ENCODE measurements at regions of chr9 and their contacts with region 1.

Region 1: GRCh38 chr9:110152704-110153374 is 55.1 kb downstream of the C9orf152 start:
- H3K4me3 Mint-ChIP-seq: no peak overlapping the region
- H3K27ac Mint-ChIP-seq: no peak overlapping the region
- H3K4me1 Mint-ChIP-seq: peaks cover 60% of the 10 kb centered on the region
- H3K27me3 Mint-ChIP-seq: no peaks in the 10 kb centered on the region

Region 2: GRCh38 chr9:109574068-109574882 is 578.6 kb before region 1 on chr9:
- intact Hi-C with region 1: loop called (anchors 10 kb)
- H3K4me3 Mint-ChIP-seq: no peak overlapping the region
- H3K27ac Mint-ChIP-seq: no peak overlapping the region
- H3K4me1 Mint-ChIP-seq: no peaks in the 10 kb centered on the region
- H3K27me3 Mint-ChIP-seq: peaks cover 14% of the 10 kb centered on the region

Region 3: GRCh38 chr9:109903515-109904138 is 249.2 kb before region 1 on chr9:
- intact Hi-C with region 1: loop called (anchors 1 kb)
- H3K4me3 Mint-ChIP-seq: no peak overlapping the region
- H3K27ac Mint-ChIP-seq: no peak overlapping the region
- H3K4me1 Mint-ChIP-seq: peaks cover 15% of the 10 kb centered on the region
- H3K27me3 Mint-ChIP-seq: peaks cover 7% of the 10 kb centered on the region

Region 4: GRCh38 chr9:110021891-110022290 is 130.9 kb before region 1 on chr9:
- intact Hi-C with region 1: no loop called
- H3K4me3 Mint-ChIP-seq: peak overlapping the region; percentile 39
- H3K27ac Mint-ChIP-seq: peak overlapping the region; percentile 76
- H3K4me1 Mint-ChIP-seq: peaks cover 25% of the 10 kb centered on the region
- H3K27me3 Mint-ChIP-seq: peaks cover 45% of the 10 kb centered on the region

Region 5: GRCh38 chr9:110058304-110058953 is 94.4 kb before region 1 on chr9:
- intact Hi-C with region 1: loop called (anchors 2 kb)
- H3K4me3 Mint-ChIP-seq: no peak overlapping the region
- H3K27ac Mint-ChIP-seq: peak overlapping the region; percentile 7
- H3K4me1 Mint-ChIP-seq: peaks cover 19% of the 10 kb centered on the region
- H3K27me3 Mint-ChIP-seq: no peaks in the 10 kb centered on the region

Region 6: DNA sequence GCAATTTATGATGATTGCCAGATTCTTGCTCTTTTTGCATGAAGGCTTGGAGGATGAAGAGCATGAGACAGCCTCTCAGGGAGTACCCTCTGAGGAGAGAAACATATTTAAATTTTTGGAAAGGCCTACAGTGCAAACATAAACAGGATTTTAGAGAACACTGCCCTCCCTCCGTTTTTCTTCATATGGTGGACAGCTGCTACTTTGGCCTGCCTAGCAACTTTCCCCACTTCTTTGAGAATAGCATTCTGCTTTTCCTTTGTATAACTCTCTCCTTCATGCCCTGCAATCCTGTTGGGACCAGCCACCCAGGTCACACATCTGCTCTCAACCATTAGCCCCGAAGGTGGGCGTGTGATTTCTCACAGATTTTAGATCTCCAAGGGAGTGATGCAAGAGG is 123.9 kb after region 1 on chr9:
- intact Hi-C with region 1: no loop called
- H3K4me3 Mint-ChIP-seq: no peak overlapping the region
- H3K27ac Mint-ChIP-seq: no peak overlapping the region
- H3K4me1 Mint-ChIP-seq: peaks cover 5% of the 10 kb centered on the region
- H3K27me3 Mint-ChIP-seq: no peaks in the 10 kb centered on the region

Measured in dendritic cell treated with granulocyte-macrophage colony-stimulating factor and Interleukin-4, amounts not matched to agents 40 ng/mL and 50 ng/mL, for 4 days (primary cell).